ENCODE measurements at regions of chr6 and their contacts with region 1.

Region 1: GRCh38 chr6:143842902-143843676 is at the start of gene LTV1:
- DNase-seq: peak; percentile 96
- H3K4me3 ChIP-seq: peak within 1 kb of the TSS; percentile 96
- H3K27ac ChIP-seq: peak within 1 kb of the TSS; percentile 95
- H3K4me1 ChIP-seq: peaks cover 28% of the 10 kb centered on the region
- H3K27me3 ChIP-seq: no peaks in the 10 kb centered on the region
- CTCF ChIP-seq: no peak
- total RNA-seq, gene LTV1: 12.9 TPM

Region 2: GRCh38 chr6:143677891-143678791 is 164.9 kb before region 1 on chr6 and contains the start of gene PHACTR2:
- intact Hi-C with region 1: loop called (anchors 10 kb)
- DNase-seq: peak; percentile 80
- H3K4me3 ChIP-seq: peak within 1 kb of the TSS; percentile 86
- H3K27ac ChIP-seq: peak within 1 kb of the TSS; percentile 98
- H3K4me1 ChIP-seq: peaks cover 82% of the 10 kb centered on the region
- H3K27me3 ChIP-seq: no peaks in the 10 kb centered on the region
- CTCF ChIP-seq: no peak
- total RNA-seq, gene PHACTR2: 71.0 TPM